ENCODE measurements at regions of chr9 and their contacts with region 1.

Region 1: GRCh38 chr9:136944519-136945279 is at the starts of genes C8G and FBXW5:
- DNase-seq: peak; percentile 96
- ATAC-seq: peak; percentile 74 to 75
- total RNA-seq, gene C8G: 0.88 to 3.5 TPM
- total RNA-seq, gene FBXW5: 98.4 to 130 TPM

Region 2: DNA sequence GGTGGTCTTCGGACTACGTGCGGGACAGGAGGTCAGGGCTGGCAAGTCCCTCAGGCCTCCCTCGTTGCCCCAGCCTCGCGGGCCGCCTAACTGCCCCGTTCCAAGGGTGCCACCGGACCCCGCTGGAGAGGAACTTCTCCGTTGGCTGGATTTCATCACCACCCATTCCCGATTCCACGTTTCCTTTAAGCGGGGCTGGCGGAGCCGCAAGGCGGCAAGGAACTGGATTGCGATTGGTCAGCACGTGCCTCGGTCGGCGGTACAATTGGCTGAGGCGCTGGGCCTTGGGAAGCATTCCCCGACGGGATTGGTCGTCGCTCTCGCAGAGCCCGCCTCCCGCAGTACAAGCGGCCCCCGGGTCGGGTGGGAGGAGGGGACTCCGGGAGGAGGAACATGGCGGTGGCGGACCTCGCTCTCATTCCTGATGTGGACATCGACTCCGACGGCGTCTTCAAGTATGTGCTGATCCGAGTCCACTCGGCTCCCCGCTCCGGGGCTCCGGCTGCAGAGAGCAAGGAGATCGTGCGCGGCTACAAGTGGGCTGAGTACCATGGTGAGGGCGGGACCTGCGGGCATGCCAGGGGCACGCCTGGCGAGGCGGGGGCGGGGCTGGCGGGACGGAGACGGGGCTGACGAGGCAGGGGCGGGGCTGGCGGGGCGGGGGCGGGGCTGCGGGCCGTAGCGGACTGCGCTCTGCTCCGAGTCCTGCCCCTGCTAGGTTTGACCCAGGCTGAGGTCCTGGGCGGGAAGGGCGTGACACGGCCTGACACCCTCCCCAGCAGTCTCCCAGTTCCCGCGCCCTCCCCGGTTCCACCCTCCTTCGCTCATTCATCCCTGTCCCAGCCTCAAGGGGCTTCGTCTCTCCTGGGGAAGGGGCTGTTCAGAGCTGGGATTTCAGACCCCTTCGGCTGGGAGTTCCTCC is 95.4 kb before region 1 on chr9 and contains the start of gene PHPT1:
- intact Hi-C with region 1: loop called in 1 of 2 experiments (anchors 2 kb)
- DNase-seq: peak; percentile 99
- ATAC-seq: peak; percentile 85 to 87
- total RNA-seq, gene PHPT1: 184 to 189 TPM

Region 3: GRCh38 chr9:136991993-136992818 is 47.5 kb after region 1 on chr9 and contains the start of gene PAXX:
- intact Hi-C with region 1: loop called in 1 of 2 experiments (anchors 10 kb)
- DNase-seq: peak; percentile 95
- ATAC-seq: peak; percentile 93 to 97
- total RNA-seq, gene PAXX: 25.4 to 30.2 TPM

Region 4: GRCh38 chr9:137034863-137035761 is 90.4 kb after region 1 on chr9:
- intact Hi-C with region 1: loop called (anchors 2 to 5 kb)
- DNase-seq: peak; percentile 78
- ATAC-seq: peak; percentile 72 to 82

Region 5: GRCh38 chr9:137055385-137056364 is 111.0 kb after region 1 on chr9:
- intact Hi-C with region 1: no loop called
- DNase-seq: peak; percentile 89
- ATAC-seq: peak; percentile 91 to 92

Measured in left cardiac atrium (tissue), 4 donors.